ENCODE measurements at regions of chr14 and their contacts with region 1.

Region 1: DNA sequence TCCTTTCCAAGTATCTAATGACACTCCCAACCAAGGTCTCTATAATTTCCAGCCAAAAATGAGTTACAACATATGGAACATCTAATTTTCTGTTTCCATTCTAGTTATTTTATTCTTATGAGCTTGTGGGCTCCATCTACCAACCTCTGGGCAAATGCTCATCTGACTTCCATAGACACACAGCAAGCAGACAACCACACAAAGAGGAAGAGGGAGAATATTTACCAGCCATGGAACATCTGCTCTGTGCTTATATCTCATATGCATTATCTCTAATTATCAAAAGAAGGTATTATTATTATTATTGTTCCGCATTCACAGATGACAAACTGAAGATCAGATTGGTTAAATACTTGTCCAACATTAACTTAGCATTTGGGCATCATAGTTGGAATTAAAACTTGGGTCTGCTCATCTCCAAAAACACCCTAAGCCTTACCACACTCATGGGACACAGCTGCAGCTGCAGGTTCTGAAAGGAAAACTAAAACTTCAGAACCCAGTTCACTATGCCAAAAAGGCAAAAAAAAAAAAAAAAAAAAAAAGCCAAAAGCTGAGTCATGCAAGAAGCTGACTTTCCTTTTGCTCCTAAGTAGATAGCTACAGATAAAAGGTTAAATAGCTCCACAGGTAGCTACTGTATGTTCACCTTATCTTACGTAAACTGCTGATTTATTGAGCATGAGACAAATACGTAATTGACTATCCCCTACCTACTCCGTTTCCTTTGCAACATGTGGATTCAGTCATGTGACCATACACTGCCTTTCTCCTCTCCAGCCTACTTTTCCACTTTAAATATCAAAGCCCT is 23.6 kb upstream of the TCL1B start:
- DNase-seq: peak; percentile 62
- ATAC-seq: peak; percentile 16
- H3K4me3 ChIP-seq: peak overlapping the region in 1 of 5 experiments; percentile 33
- H3K4me3 Mint-ChIP-seq: peak overlapping the region; percentile 56
- H3K27ac ChIP-seq: peak overlapping the region; percentile 58 to 78
- H3K27ac Mint-ChIP-seq: peak overlapping the region; percentile 97
- H3K4me1 ChIP-seq: peaks cover 72 to 83% of the 10 kb centered on the region in 2 donors
- H3K4me1 Mint-ChIP-seq: peaks cover 87% of the 10 kb centered on the region
- H3K27me3 ChIP-seq: no peaks in the 10 kb centered on the region
- H3K27me3 Mint-ChIP-seq: peaks cover 31% of the 10 kb centered on the region
- CTCF ChIP-seq: no peak

Region 2: DNA sequence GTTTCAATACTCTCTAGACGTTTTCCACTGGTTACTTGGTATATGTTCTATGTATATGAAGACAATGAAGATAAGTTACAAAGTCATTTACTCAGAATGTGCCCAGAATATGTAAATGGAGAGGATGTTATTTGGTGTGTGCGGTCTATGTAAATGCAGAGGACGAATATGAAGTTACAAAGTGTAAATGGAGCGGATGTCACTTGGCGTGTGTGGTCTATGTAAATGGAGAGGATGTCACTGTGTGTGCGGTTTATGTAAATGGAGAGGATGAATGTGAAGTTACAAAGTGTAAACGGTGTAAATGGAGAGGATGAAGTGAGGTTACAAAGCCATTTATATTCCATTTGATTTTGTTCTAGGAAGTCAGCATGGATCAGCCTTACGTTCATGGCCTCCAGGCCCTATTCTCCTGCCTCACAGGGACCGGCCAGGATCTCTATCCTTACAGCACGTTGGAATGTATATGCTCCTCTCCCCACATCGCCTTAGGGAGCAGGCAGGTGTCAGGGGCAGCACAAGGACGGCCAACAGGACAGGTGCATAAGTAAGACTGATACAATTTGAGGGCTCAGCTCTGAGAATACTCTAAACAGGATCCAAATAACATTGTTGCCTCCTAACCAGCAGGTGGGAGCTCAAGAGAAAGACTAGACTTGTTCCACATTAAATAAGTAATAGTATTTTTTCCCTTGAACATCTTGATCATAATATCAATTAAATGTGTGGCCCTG is 85.3 kb before region 1 on chr14:
- CTCF ChIA-PET with region 1: no interaction called
- POLR2A ChIA-PET with region 1: no interaction called
- intact Hi-C with region 1: loop called (anchors 5 kb)
- DNase-seq: peak; percentile 80
- ATAC-seq: peak; percentile 93
- H3K4me3 ChIP-seq: no peak overlapping the region
- H3K4me3 Mint-ChIP-seq: peak overlapping the region; percentile 28
- H3K27ac ChIP-seq: no peak overlapping the region
- H3K27ac Mint-ChIP-seq: no peak overlapping the region
- H3K4me1 ChIP-seq: peaks cover 25 to 27% of the 10 kb centered on the region in 2 donors
- H3K4me1 Mint-ChIP-seq: peaks cover 24% of the 10 kb centered on the region
- H3K27me3 ChIP-seq: peaks cover 0 to 56% (median 35%) of the 10 kb centered on the region in 4 experiments
- H3K27me3 Mint-ChIP-seq: peaks cover 53% of the 10 kb centered on the region
- CTCF ChIP-seq: no peak

Region 3: GRCh38 chr14:95609387-95609990 is 53.1 kb before region 1 on chr14:
- CTCF ChIA-PET with region 1: interaction called, 31 read pairs
- POLR2A ChIA-PET with region 1: interaction called, 3 read pairs
- intact Hi-C with region 1: loop called (anchors 5 kb)
- DNase-seq: peak; percentile 52
- ATAC-seq: no peak
- H3K4me3 ChIP-seq: no peak overlapping the region
- H3K4me3 Mint-ChIP-seq: no peak overlapping the region
- H3K27ac ChIP-seq: no peak overlapping the region
- H3K27ac Mint-ChIP-seq: no peak overlapping the region
- H3K4me1 ChIP-seq: peaks cover 13 to 29% of the 10 kb centered on the region in 2 donors
- H3K4me1 Mint-ChIP-seq: peaks cover 31% of the 10 kb centered on the region
- H3K27me3 ChIP-seq: peaks cover 0 to 10% (median 3%) of the 10 kb centered on the region in 4 experiments
- H3K27me3 Mint-ChIP-seq: peaks cover 45% of the 10 kb centered on the region
- CTCF ChIP-seq: peak; percentile 51

Region 4: DNA sequence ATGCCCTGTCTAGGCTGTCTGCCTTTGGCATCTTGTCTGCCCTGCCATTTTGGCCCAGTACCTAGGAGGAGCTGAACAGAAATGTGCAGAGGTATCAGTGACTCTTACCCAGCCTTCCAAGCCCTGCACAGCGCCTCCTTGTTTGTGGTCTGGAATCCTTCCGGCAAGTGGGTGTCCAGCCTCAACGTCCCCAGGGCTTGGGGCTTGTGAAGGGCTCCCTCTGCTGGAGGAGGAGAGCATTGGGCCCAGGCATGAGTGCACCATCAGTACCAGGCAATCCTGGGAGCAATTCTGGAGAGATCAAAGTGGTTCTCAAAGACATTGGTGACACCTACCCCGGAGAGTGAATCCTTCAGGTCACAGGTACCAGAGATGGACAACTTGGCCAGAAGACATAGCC is 21.2 kb after region 1 on chr14:
- CTCF ChIA-PET with region 1: interaction called, 11 read pairs
- POLR2A ChIA-PET with region 1: interaction called, 5 read pairs
- intact Hi-C with region 1: no loop called
- DNase-seq: peak; percentile 53
- ATAC-seq: peak; percentile 56
- H3K4me3 ChIP-seq: no peak overlapping the region
- H3K4me3 Mint-ChIP-seq: no peak overlapping the region
- H3K27ac ChIP-seq: no peak overlapping the region
- H3K27ac Mint-ChIP-seq: no peak overlapping the region
- H3K4me1 ChIP-seq: peaks cover 61 to 68% of the 10 kb centered on the region in 2 donors
- H3K4me1 Mint-ChIP-seq: peaks cover 62% of the 10 kb centered on the region
- H3K27me3 ChIP-seq: no peaks in the 10 kb centered on the region
- H3K27me3 Mint-ChIP-seq: peaks cover 24% of the 10 kb centered on the region
- CTCF ChIP-seq: peak; percentile 57

Region 5: DNA sequence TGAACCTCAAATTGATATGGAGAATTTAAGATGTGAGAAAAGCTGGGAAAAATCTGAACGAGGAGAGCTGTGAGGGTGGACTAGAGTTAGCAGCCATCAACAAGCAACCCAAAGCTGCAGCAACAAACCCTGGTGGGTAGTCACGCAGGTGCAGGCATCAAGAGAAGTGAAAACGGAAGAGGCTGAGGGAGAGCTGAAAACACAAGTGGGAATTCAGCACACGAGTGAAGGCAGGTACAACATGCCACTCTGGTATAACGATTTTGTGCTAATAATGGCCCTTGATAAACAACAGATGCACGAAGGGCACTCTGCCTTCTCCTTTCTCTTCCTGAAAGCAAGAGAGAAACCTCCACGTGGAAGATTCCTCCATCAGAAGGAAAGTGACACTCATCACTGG is 35.2 kb after region 1 on chr14:
- CTCF ChIA-PET with region 1: interaction called, 16 read pairs
- POLR2A ChIA-PET with region 1: interaction called, 25 read pairs
- intact Hi-C with region 1: loop called (anchors 1 kb)
- DNase-seq: peak; percentile 76
- ATAC-seq: peak; percentile 64
- H3K4me3 ChIP-seq: peak overlapping the region in 3 of 5 experiments; percentile 9 to 56 (median 16)
- H3K4me3 Mint-ChIP-seq: peak overlapping the region; percentile 81
- H3K27ac ChIP-seq: peak overlapping the region; percentile 87 to 94
- H3K27ac Mint-ChIP-seq: peak overlapping the region; percentile 95
- H3K4me1 ChIP-seq: peaks cover 100% of the 10 kb centered on the region in 2 donors
- H3K4me1 Mint-ChIP-seq: peaks cover 83% of the 10 kb centered on the region
- H3K27me3 ChIP-seq: no peaks in the 10 kb centered on the region
- H3K27me3 Mint-ChIP-seq: peaks cover 34% of the 10 kb centered on the region
- CTCF ChIP-seq: peak; percentile 19

Region 6: DNA sequence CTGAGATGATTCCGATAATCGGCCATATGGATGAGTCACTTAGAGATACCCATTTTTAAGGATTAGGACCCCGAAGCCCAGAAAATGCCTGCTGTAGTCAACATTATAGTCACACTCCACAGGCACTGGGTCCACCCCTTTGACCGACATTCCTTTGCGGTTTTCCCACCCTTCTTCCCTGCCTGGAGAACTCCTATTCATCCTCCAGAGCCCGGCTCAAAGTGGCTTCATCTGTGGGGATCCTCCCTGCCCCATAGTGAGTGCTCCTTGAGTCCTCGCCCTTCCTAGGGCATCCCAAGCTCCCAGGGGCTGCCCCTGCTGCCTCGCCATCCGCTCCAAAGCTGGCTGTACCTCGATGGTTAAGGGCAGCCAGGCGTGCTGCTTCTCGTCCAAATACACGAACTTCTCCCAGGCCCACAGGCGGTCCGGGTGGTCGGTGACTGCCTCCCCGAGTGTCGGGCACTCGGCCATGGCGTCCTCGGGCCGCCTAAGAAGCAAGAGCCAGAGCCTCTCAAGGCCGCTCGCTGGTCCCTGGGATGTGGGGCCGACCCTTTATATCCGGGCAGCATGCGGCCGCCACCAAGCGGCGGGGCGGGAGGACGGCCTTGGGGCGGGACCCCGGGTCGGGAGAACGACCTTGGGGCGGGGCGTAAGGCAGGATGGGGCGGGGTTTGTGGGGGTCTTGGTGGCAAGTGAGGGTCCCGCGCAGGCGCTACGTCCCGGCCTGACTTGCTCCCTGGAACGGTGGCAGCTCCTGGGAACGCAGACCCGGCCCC is 51.2 kb after region 1 on chr14 and contains the start of gene TCL1A:
- CTCF ChIA-PET with region 1: interaction called, 13 read pairs
- POLR2A ChIA-PET with region 1: interaction called, 8 read pairs
- intact Hi-C with region 1: loop called (anchors 1 kb)
- DNase-seq: peak; percentile 78
- ATAC-seq: peak; percentile 90
- H3K4me3 ChIP-seq: peak within 1 kb of the TSS; percentile 70 to 96 (median 90)
- H3K4me3 Mint-ChIP-seq: peak within 1 kb of the TSS; percentile 95
- H3K27ac ChIP-seq: peak within 1 kb of the TSS; percentile 76 to 81
- H3K27ac Mint-ChIP-seq: peak within 1 kb of the TSS; percentile 96
- H3K4me1 ChIP-seq: peaks cover 28 to 59% of the 10 kb centered on the region in 2 donors
- H3K4me1 Mint-ChIP-seq: peaks cover 58% of the 10 kb centered on the region
- H3K27me3 ChIP-seq: peaks cover 0 to 5% (median 3%) of the 10 kb centered on the region in 4 experiments
- H3K27me3 Mint-ChIP-seq: peaks cover 29% of the 10 kb centered on the region
- CTCF ChIP-seq: peak; percentile 33
- total RNA-seq, gene TCL1A: 272 and 275 TPM in 2 replicates

Region 7: GRCh38 chr14:95725685-95726336 is 63.2 kb after region 1 on chr14:
- CTCF ChIA-PET with region 1: interaction called, 4 read pairs
- POLR2A ChIA-PET with region 1: interaction called, 9 read pairs
- intact Hi-C with region 1: loop called (anchors 5 kb)
- DNase-seq: peak; percentile 78
- ATAC-seq: peak; percentile 91
- H3K4me3 ChIP-seq: peak overlapping the region in 4 of 5 experiments; percentile 3 to 45 (median 32)
- H3K4me3 Mint-ChIP-seq: peak overlapping the region; percentile 68
- H3K27ac ChIP-seq: peak overlapping the region; percentile 59 to 74
- H3K27ac Mint-ChIP-seq: peak overlapping the region; percentile 90
- H3K4me1 ChIP-seq: peaks cover 66 to 69% of the 10 kb centered on the region in 2 donors
- H3K4me1 Mint-ChIP-seq: peaks cover 67% of the 10 kb centered on the region
- H3K27me3 ChIP-seq: no peaks in the 10 kb centered on the region
- H3K27me3 Mint-ChIP-seq: peaks cover 30% of the 10 kb centered on the region
- CTCF ChIP-seq: no peak

Measured in B cell (primary cell).